Activated naive CD4-positive, alpha-beta T cell treated with anti-CD3 and anti-CD28 coated beads for 36 hours (primary cell): ENCODE measurements at regions of chr7 and their contacts with region 1.

Region 1: DNA sequence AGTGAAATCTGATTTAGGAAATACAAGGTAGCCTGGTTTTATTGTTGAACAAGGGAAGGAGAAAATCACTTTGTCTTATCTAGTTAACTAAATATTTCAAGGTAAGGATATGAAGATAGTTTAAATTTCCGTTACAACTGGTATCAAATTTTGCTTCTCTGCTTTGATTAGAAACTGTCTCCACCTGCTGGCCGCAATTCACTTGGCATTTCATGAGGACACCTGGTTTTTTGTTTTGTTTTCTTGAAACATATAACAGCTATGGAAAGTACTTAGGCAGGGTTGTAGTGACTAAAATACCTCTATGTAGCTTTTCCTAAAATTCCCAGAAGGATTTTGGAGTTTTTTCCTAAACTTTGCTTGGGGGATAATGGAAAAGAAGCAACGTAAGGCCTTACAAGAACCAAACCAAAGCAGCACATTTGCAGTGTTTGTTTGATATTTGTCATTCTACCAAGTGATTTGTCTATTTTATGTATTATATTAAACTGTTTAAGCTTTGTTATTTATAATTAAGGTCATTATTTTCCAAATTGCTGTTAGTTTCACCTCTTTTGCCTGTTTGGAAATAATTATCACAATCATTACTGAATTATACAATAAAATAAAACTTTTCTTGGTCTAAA is 73.6 kb downstream of the AHCYL2 start:
- DNase-seq: peak; percentile 82
- H3K4me3 Mint-ChIP-seq: no peak overlapping the region
- H3K27ac Mint-ChIP-seq: no peak overlapping the region
- H3K4me1 Mint-ChIP-seq: no peaks in the 10 kb centered on the region
- H3K27me3 Mint-ChIP-seq: no peaks in the 10 kb centered on the region

Region 2: DNA sequence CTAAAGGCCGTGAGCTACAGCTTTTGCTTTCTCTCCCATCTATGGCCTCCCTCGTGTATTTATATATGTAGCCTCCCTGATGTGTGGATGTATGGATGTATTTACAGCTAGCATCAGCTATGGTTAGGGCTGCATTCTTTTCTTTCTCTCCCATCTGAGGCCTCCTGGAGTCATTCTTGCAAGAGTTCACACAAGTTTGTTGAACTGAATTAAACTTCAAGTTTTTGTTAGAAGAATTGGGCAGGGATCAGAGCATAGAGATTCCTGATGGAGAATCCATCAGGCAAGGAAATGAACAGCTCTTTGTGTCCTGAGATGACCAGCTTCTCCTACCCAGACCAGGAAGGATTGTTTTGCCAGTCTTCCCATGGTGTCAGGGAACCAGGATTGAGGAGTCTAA is 13.3 kb before region 1 on chr7:
- CTCF ChIA-PET with region 1: interaction called, 18 read pairs
- intact Hi-C with region 1: no loop called
- DNase-seq: no peak
- H3K4me3 Mint-ChIP-seq: no peak overlapping the region
- H3K27ac Mint-ChIP-seq: no peak overlapping the region
- H3K4me1 Mint-ChIP-seq: no peaks in the 10 kb centered on the region
- H3K27me3 Mint-ChIP-seq: no peaks in the 10 kb centered on the region

Region 3: GRCh38 chr7:129468087-129468486 is 169.7 kb after region 1 on chr7:
- CTCF ChIA-PET with region 1: no interaction called
- intact Hi-C with region 1: no loop called
- DNase-seq: no peak
- H3K4me3 Mint-ChIP-seq: no peak overlapping the region
- H3K27ac Mint-ChIP-seq: no peak overlapping the region
- H3K4me1 Mint-ChIP-seq: peaks cover 12% of the 10 kb centered on the region
- H3K27me3 Mint-ChIP-seq: no peaks in the 10 kb centered on the region